ENCODE measurements at regions of chr20 and their contacts with region 1.

Region 1: DNA sequence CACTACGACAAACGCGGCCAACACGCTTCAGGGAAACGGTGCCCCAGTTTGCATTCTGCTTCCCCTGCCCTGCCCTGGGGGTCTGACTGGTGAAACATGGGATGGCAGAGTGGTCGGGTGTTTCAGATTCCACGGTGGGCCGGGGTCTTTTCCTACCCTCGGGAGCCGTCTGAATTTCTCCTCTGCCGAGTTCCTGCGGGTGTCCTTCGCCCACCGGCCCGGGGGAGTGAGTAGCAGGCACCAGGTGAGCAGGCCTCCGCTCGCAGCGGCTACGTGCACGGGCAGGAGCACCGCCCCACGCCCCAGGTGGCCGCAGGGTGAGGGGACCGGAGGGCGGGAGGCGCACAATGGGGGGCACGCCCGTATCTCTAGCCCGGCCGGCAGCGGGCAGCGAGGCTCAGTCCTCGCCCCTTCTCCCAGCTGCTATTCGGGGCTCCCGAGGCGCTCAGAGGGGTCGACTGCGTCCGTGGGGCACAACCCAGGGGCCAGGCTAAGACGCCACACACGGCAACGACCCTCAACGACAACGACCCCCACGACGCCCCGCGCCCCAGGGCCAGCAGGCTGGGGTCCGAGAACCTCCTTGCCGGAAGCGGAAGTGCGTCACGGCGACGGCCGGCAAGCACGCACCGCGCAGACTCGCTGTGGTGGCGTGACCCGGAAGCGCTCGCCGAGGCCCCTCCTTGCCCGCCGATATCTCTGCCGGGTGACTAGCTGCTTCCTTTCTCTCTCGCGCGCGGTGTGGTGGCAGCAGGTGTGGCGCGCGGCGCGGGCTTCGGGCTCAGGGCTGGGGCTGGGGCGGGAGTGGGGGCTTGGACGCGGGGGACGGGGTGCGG is at the start of gene RPS21:
- DNase-seq: peak; percentile 92 to 96 (median 96)
- H3K4me3 ChIP-seq: peak within 1 kb of the TSS; percentile 68 to 100 (median 92)
- H3K27ac ChIP-seq: peak within 1 kb of the TSS; percentile 75 to 94
- H3K4me1 ChIP-seq: peaks cover 1 to 27% (median 22%) of the 10 kb centered on the region in 4 experiments
- H3K27me3 ChIP-seq: no peaks in the 10 kb centered on the region

Region 2: DNA sequence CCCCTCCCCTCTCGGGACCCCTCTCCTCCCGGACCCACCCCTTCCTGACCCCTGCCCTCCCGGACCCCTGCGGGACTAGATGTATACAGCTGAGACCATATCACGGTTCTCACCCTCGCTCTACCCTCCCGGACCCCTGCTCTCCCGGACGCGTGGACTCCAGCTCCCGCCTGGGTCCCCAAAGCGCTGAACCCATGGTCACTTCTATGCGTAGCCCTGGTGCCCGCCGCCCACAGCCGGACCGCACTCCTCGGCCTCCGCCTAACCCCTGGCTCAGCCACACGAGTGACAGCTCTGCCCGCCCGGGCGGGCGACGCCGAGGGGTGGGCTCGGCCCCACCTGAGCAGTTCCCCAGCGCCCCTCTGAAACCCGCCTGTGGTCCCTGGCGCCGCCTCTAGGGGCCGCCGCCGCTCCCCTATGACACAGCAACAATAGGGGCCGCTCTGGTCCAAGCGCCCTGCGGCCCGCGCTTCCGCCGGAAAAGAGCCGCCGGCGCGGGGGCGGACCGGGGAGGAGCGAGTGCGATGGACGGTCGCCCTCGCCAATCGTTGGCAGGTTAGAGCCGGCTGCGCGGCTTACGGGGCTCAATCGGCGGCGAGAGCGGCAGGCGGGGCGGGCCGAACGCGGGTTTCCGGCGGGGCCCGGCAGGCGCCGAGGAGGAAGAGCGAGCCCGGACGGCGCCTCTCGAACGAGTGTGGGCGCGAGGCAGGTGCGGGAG is 84.1 kb before region 1 on chr20 and contains the start of gene ADRM1:
- CTCF ChIA-PET with region 1: interaction called, 24 read pairs
- POLR2A ChIA-PET with region 1: interaction called, 3 read pairs
- DNase-seq: peak; percentile 96 to 99 (median 98)
- H3K4me3 ChIP-seq: peak within 1 kb of the TSS; percentile 62 to 92 (median 78)
- H3K27ac ChIP-seq: peak within 1 kb of the TSS; percentile 74 to 86
- H3K4me1 ChIP-seq: peaks cover 5 to 25% (median 22%) of the 10 kb centered on the region in 4 experiments
- H3K27me3 ChIP-seq: no peaks in the 10 kb centered on the region

Region 3: GRCh38 chr20:62423326-62423986 is 36.9 kb after region 1 on chr20:
- CTCF ChIA-PET with region 1: no interaction called
- POLR2A ChIA-PET with region 1: interaction called, 12 read pairs
- DNase-seq: no peak
- H3K4me3 ChIP-seq: no peak overlapping the region
- H3K27ac ChIP-seq: no peak overlapping the region
- H3K4me1 ChIP-seq: peaks cover 0 to 1% (median 0%) of the 10 kb centered on the region in 4 experiments
- H3K27me3 ChIP-seq: peaks cover 0 to 20% (median 0%) of the 10 kb centered on the region in 5 experiments